AG04449 (cell line): ENCODE measurements at regions of chr3 and their contacts with region 1.

Region 1: DNA sequence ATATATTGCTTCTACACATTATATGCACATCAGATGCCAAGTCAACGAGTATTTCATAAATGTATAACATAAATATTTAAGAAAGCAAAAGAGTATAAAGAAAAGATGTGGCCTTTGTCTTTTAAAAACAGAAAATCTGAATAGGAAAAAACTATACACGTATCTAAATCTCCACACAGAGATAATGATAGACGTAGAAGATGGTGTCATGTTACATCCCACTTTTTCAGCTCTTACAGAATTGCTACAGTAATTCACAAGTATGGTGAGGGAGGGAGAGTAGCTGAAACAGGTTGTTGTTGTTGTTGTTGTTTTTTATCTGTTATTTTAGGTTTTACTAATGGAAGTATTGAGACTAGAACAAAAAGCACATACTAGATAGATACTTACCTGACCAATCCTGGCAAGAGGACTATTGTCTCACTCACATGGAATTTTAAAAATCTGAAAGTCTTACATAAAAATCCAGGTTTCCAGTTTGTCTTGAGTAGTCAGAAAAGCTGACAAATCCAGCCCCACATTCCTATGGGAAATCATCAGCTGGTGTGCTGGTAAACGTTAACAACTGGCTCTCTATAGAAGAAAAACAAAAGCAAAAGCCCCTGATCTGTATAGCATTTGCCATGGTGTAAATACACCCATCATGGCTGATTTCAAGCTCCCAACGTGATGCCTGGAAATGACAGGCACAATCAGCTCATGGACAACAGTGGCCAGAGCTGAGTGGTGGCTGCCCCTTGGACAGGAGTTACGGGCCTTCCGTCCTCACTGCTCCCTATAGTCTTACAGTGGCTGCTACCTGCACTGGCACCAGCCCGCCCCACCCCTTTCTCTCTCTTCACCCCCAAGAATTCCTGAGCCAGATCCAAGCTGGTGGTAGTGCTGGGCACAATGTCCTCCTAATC is 47.4 kb upstream of the VGLL4 start:
- DNase-seq: no peak
- H3K4me3 ChIP-seq: no peak overlapping the region
- CTCF ChIP-seq: no peak

Region 2: GRCh38 chr3:11701901-11702300 is 10.8 kb after region 1 on chr3:
- CTCF ChIA-PET with region 1: interaction called, 11 read pairs
- POLR2A ChIA-PET with region 1: interaction called, 3 read pairs
- DNase-seq: no peak
- H3K4me3 ChIP-seq: no peak overlapping the region
- CTCF ChIP-seq: no peak

Region 3: GRCh38 chr3:11757441-11757875 is 66.3 kb after region 1 on chr3:
- CTCF ChIA-PET with region 1: no interaction called
- POLR2A ChIA-PET with region 1: no interaction called
- DNase-seq: no peak
- H3K4me3 ChIP-seq: no peak overlapping the region
- CTCF ChIP-seq: no peak